Naive thymus-derived CD4-positive, alpha-beta T cell (primary cell): ENCODE measurements at regions of chr16 and their contacts with region 1.

Region 1: DNA sequence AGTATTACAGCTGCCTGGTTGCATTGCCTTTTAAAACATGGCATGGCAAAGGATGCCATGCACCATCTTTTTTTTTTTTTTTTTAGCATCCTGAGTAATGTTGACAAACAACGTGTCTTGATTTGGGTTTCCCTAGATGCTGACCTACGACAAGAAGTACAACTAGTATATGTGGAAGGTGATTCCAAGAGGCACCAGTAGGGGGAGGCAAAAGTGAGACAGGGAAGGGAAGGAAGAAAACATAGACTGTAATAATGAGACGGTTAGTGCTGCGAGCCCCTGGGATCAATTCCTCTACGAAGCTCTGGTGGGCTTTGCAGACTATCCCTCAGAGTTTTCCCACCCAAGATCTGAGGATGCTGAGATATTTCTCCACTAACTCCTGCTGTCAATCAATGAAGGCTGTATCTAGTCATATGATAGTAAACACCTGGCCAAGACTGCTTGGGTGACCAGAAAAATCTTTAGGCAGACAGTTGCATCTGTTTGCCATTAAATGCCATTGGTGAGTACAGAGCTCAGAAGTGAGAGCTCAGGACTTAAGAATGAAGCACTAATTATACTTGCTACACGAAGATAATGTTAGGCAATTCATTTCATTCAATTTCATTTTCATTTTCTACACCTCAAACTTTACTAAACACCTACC is 458.6 kb upstream of the GOT2 start:
- DNase-seq: peak in 5 of 9 donors; percentile 2 to 44 (median 18)
- ATAC-seq: no peak
- H3K4me3 ChIP-seq: no peak overlapping the region
- H3K4me3 Mint-ChIP-seq: peak overlapping the region in 5 of 10 donors; percentile 31 to 71 (median 55)
- H3K27ac ChIP-seq: no peak overlapping the region
- H3K27ac Mint-ChIP-seq: peak overlapping the region in 1 of 9 donors; percentile 25
- H3K4me1 ChIP-seq: no peaks in the 10 kb centered on the region
- H3K4me1 Mint-ChIP-seq: peaks cover 0 to 10% (median 0%) of the 10 kb centered on the region in 7 donors
- H3K27me3 ChIP-seq: no peaks in the 10 kb centered on the region
- H3K27me3 Mint-ChIP-seq: no peaks in the 10 kb centered on the region

Region 2: DNA sequence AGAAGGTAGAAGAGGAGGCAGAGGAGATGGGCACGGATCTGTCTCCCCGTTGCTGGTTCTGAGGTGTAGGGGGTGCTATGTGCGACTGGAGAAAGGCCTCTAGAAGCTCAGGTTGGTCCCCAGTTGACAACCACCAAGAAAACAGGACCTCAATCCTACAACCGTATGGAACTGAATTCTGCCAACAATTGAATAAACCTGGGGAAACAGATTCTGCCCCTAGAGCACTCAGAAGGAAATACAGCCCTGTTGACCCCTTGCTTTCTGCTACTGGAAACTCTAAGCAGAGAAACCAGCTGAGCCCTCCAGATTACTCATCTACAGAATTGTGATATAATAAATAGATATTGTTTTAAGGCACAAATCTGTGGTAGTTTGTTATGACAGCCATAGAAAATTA is 145.6 kb before region 1 on chr16:
- CTCF ChIA-PET with region 1: no interaction called
- POLR2A ChIA-PET with region 1: no interaction called
- intact Hi-C with region 1: no loop called
- DNase-seq: no peak
- ATAC-seq: no peak
- H3K4me3 ChIP-seq: no peak overlapping the region
- H3K4me3 Mint-ChIP-seq: no peak overlapping the region
- H3K27ac ChIP-seq: no peak overlapping the region
- H3K27ac Mint-ChIP-seq: no peak overlapping the region
- H3K4me1 ChIP-seq: no peaks in the 10 kb centered on the region
- H3K4me1 Mint-ChIP-seq: no peaks in the 10 kb centered on the region
- H3K27me3 ChIP-seq: no peaks in the 10 kb centered on the region
- H3K27me3 Mint-ChIP-seq: no peaks in the 10 kb centered on the region

Region 3: DNA sequence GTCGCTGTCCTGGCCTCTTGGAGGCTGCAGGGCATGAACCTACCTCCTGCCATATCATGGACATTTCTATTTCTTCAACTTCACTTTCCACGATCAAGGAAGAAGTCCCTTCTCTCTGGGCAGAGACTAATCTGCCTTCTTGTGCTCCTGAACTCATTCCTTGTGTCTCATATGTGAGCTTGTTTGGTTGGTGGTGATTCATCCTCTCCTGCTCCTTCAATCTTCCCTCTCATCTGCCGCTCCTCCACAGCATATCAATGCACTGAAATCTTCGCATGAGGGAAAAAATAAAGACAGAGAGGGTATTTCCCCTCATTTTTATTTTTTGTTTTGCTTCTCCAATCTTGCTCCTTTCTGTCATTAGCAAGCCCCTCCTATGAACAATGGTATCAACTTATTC is 113.2 kb after region 1 on chr16:
- CTCF ChIA-PET with region 1: no interaction called
- POLR2A ChIA-PET with region 1: no interaction called
- intact Hi-C with region 1: loop called in 1 of 2 experiments (anchors 5 kb)
- DNase-seq: no peak
- ATAC-seq: no peak
- H3K4me3 ChIP-seq: no peak overlapping the region
- H3K4me3 Mint-ChIP-seq: no peak overlapping the region
- H3K27ac ChIP-seq: no peak overlapping the region
- H3K27ac Mint-ChIP-seq: no peak overlapping the region
- H3K4me1 ChIP-seq: no peaks in the 10 kb centered on the region
- H3K4me1 Mint-ChIP-seq: no peaks in the 10 kb centered on the region
- H3K27me3 ChIP-seq: no peaks in the 10 kb centered on the region
- H3K27me3 Mint-ChIP-seq: no peaks in the 10 kb centered on the region

Region 4: GRCh38 chr16:59341368-59341767 is 148.7 kb after region 1 on chr16:
- CTCF ChIA-PET with region 1: no interaction called
- POLR2A ChIA-PET with region 1: no interaction called
- intact Hi-C with region 1: loop called in 1 of 2 experiments (anchors 10 kb)
- DNase-seq: no peak
- ATAC-seq: no peak
- H3K4me3 ChIP-seq: no peak overlapping the region
- H3K4me3 Mint-ChIP-seq: no peak overlapping the region
- H3K27ac ChIP-seq: no peak overlapping the region
- H3K27ac Mint-ChIP-seq: no peak overlapping the region
- H3K4me1 ChIP-seq: no peaks in the 10 kb centered on the region
- H3K4me1 Mint-ChIP-seq: no peaks in the 10 kb centered on the region
- H3K27me3 ChIP-seq: no peaks in the 10 kb centered on the region
- H3K27me3 Mint-ChIP-seq: peaks cover 0 to 5% (median 0%) of the 10 kb centered on the region in 5 donors